Heart right ventricle (tissue), 16 donors: ENCODE measurements at regions of chr10 and their contacts with region 1.

Region 1: DNA sequence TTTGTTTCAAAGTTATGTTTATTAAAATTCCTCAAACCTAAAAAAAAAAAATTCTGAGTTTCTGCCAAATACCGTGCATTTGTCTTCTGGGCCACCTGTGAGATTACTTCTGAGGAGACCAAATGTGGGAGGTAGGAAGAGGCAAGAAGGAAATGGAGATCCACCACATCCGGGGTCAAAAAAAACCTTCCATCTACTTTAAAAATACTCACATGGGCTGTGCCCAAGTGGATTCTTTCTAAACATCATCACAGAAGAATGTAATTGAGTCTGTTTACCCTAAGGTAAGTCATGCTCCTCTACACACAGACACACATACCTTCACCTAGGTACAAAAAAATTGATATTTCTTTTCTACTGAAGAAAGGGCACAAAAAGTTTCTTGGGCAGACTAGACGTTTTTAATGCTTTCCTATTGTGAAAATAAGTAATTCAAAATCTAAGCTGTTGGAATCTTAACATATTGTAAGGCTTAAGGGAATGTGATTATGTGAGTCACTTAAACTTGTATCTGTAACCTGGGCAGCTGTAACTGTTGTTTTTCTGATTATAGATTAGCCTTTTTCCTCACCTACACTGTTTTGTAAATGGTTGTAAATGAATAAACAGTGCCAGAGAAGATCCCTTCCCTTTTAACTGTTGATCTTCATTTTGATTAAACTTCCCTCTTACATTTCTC is 19.1 kb upstream of the SPOCK2 start:
- DNase-seq: no peak
- ATAC-seq: no peak
- H3K4me3 ChIP-seq: no peak overlapping the region
- H3K27ac ChIP-seq: peak overlapping the region in 5 of 10 donors; percentile 22 to 81 (median 33)
- H3K4me1 ChIP-seq: peaks cover 7 to 59% (median 33%) of the 10 kb centered on the region in 9 donors
- H3K27me3 ChIP-seq: no peaks in the 10 kb centered on the region
- CTCF ChIP-seq: no peak

Region 2: DNA sequence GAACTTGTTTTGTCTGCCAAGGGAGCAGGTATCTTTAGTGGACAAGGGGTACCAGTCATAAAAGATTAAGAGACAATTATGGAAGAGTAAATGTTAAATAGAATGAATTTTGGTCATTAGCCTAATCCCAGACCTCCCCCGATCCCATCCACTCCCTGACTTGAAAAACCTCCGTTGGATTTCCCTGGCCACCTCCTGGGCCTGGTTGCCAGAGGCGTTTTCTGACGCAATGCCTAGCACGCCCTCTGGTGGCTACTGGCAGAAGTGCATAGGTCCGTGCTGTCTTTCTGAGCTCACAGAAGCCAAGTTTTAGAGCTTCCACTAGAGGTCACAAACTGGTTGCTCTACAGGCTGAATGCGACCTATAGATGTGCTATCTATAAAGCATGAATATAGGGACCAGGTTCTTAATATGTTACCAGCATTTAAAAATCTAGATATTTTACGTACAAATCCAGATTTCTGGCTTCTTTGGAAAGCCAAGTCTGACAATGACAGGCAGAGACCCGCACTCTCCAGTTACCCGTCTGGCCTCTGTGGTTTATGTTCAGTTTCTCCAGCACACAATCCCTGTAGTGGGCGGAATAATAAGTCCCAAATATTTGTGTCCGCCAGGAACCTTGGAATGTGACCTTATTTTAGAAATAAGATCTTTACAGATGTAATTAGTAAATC is 58.9 kb before region 1 on chr10:
- intact Hi-C with region 1: loop called in 1 of 10 experiments (anchors 5 kb)
- DNase-seq: peak; percentile 94
- ATAC-seq: peak; percentile 58 to 91 (median 84)
- H3K4me3 ChIP-seq: no peak overlapping the region
- H3K27ac ChIP-seq: no peak overlapping the region
- H3K4me1 ChIP-seq: peaks cover 0 to 25% (median 10%) of the 10 kb centered on the region in 9 donors
- H3K27me3 ChIP-seq: no peaks in the 10 kb centered on the region
- CTCF ChIP-seq: peak; percentile 99 to 100 (median 100)